ENCODE measurements at regions of chr5 and their contacts with region 1.

Region 1: GRCh38 chr5:109468737-109469420 is 59.1 kb upstream of the PJA2 start:
- DNase-seq: peak; percentile 87
- ATAC-seq: peak; percentile 97
- H3K4me3 ChIP-seq: no peak overlapping the region
- H3K4me3 Mint-ChIP-seq: no peak overlapping the region
- H3K27ac ChIP-seq: no peak overlapping the region
- H3K27ac Mint-ChIP-seq: no peak overlapping the region
- H3K4me1 ChIP-seq: peaks cover 0 to 3% of the 10 kb centered on the region in 2 donors
- H3K4me1 Mint-ChIP-seq: peaks cover 5% of the 10 kb centered on the region
- H3K27me3 ChIP-seq: no peaks in the 10 kb centered on the region
- H3K27me3 Mint-ChIP-seq: no peaks in the 10 kb centered on the region
- CTCF ChIP-seq: peak; percentile 70

Region 2: DNA sequence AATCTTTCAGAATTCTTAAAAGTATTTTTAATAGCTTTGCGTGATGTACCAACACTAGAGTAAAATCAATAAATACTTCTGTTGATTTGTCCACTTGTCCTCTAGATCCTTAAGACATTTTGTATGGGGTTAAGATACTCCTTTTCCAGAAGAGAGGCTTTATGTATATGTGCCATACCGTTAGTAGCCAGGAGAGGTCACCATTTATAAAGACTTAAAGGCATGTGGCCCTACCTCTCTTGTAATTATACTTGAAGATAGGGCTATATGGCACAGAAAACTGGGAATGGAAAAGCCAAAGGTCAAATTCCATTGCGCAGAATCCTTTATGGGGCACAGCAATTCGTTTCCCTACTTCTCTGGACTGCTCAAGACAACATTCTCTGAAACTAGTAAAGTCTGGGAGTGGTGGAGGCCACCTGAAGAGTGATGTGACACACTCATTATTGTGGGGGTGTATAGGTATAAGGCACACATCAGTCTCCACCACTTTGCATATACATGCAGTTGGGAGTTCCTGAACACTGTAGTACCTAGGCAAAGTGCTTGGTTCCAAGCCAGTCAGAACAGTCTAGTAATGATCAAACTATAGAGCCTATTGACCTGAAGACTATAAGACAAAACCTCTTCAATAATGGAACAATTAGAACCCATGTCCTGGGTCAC is 946.9 kb before region 1 on chr5:
- CTCF ChIA-PET with region 1: no interaction called
- POLR2A ChIA-PET with region 1: no interaction called
- intact Hi-C with region 1: loop called (anchors 5 kb)
- DNase-seq: peak; percentile 44
- ATAC-seq: peak; percentile 51
- H3K4me3 ChIP-seq: no peak overlapping the region
- H3K4me3 Mint-ChIP-seq: no peak overlapping the region
- H3K27ac ChIP-seq: no peak overlapping the region
- H3K27ac Mint-ChIP-seq: no peak overlapping the region
- H3K4me1 ChIP-seq: peaks cover 5 to 16% of the 10 kb centered on the region in 2 donors
- H3K4me1 Mint-ChIP-seq: peaks cover 35% of the 10 kb centered on the region
- H3K27me3 ChIP-seq: no peaks in the 10 kb centered on the region
- H3K27me3 Mint-ChIP-seq: peaks cover 10% of the 10 kb centered on the region
- CTCF ChIP-seq: peak; percentile 63

Measured in B cell (primary cell).